Activated T-helper 2 cell treated with anti-CD3 and anti-CD28 coated beads, Interferon-gamma antibody, Interleukin-2, Interleukin-4, amounts not matched to agents 10 μg/mL and 5 μg/mL and 100 μg/mL, durations not matched to agents 14 hours and 24 hours and 36 hours (primary cell): ENCODE measurements at regions of chr2 and their contacts with region 1.

Region 1: GRCh38 chr2:46394649-46395510 is 84.5 kb upstream of the TMEM247 start:
- DNase-seq: no peak
- H3K4me3 Mint-ChIP-seq: no peak overlapping the region
- H3K27ac Mint-ChIP-seq: peak overlapping the region; percentile 91
- H3K4me1 Mint-ChIP-seq: peaks cover 41% of the 10 kb centered on the region
- H3K27me3 Mint-ChIP-seq: peaks cover 3% of the 10 kb centered on the region

Region 2: GRCh38 chr2:46434851-46435273 is 40.0 kb after region 1 on chr2:
- intact Hi-C with region 1: loop called (anchors 1 kb)
- DNase-seq: no peak
- H3K4me3 Mint-ChIP-seq: peak overlapping the region; percentile 37
- H3K27ac Mint-ChIP-seq: peak overlapping the region; percentile 86
- H3K4me1 Mint-ChIP-seq: peaks cover 94% of the 10 kb centered on the region
- H3K27me3 Mint-ChIP-seq: no peaks in the 10 kb centered on the region